ENCODE measurements at regions of chr19 and their contacts with region 1.

Region 1: GRCh38 chr19:21891081-21891480 is 55.1 kb upstream of the ZNF43 start:
- DNase-seq: no peak
- ATAC-seq: no peak
- H3K4me3 ChIP-seq: no peak overlapping the region
- H3K4me3 Mint-ChIP-seq: no peak overlapping the region
- H3K27ac ChIP-seq: no peak overlapping the region
- H3K27ac Mint-ChIP-seq: no peak overlapping the region
- H3K4me1 ChIP-seq: no peaks in the 10 kb centered on the region
- H3K4me1 Mint-ChIP-seq: no peaks in the 10 kb centered on the region
- H3K27me3 ChIP-seq: no peaks in the 10 kb centered on the region
- H3K27me3 Mint-ChIP-seq: no peaks in the 10 kb centered on the region
- CTCF ChIP-seq: no peak

Region 2: GRCh38 chr19:21559444-21559843 is 331.6 kb before region 1 on chr19:
- CTCF ChIA-PET with region 1: no interaction called
- POLR2A ChIA-PET with region 1: no interaction called
- intact Hi-C with region 1: no loop called
- DNase-seq: no peak
- ATAC-seq: no peak
- H3K4me3 ChIP-seq: no peak overlapping the region
- H3K4me3 Mint-ChIP-seq: no peak overlapping the region
- H3K27ac ChIP-seq: no peak overlapping the region
- H3K27ac Mint-ChIP-seq: no peak overlapping the region
- H3K4me1 ChIP-seq: no peaks in the 10 kb centered on the region
- H3K4me1 Mint-ChIP-seq: peaks cover 7% of the 10 kb centered on the region
- H3K27me3 ChIP-seq: no peaks in the 10 kb centered on the region
- H3K27me3 Mint-ChIP-seq: no peaks in the 10 kb centered on the region
- CTCF ChIP-seq: no peak

Region 3: GRCh38 chr19:21758296-21758695 is 132.8 kb before region 1 on chr19:
- CTCF ChIA-PET with region 1: no interaction called
- POLR2A ChIA-PET with region 1: no interaction called
- intact Hi-C with region 1: loop called in 1 of 2 experiments (anchors 5 kb)
- DNase-seq: peak in 2 of 14 experiments; percentile 4 to 17
- ATAC-seq: no peak
- H3K4me3 ChIP-seq: no peak overlapping the region
- H3K4me3 Mint-ChIP-seq: no peak overlapping the region
- H3K27ac ChIP-seq: no peak overlapping the region
- H3K27ac Mint-ChIP-seq: no peak overlapping the region
- H3K4me1 ChIP-seq: no peaks in the 10 kb centered on the region
- H3K4me1 Mint-ChIP-seq: peaks cover 44% of the 10 kb centered on the region
- H3K27me3 ChIP-seq: no peaks in the 10 kb centered on the region
- H3K27me3 Mint-ChIP-seq: no peaks in the 10 kb centered on the region
- CTCF ChIP-seq: no peak

Region 4: GRCh38 chr19:21921691-21922180 is 30.7 kb after region 1 on chr19:
- CTCF ChIA-PET with region 1: no interaction called
- POLR2A ChIA-PET with region 1: no interaction called
- intact Hi-C with region 1: no loop called
- DNase-seq: no peak
- ATAC-seq: no peak
- H3K4me3 ChIP-seq: no peak overlapping the region
- H3K4me3 Mint-ChIP-seq: no peak overlapping the region
- H3K27ac ChIP-seq: no peak overlapping the region
- H3K27ac Mint-ChIP-seq: no peak overlapping the region
- H3K4me1 ChIP-seq: no peaks in the 10 kb centered on the region
- H3K4me1 Mint-ChIP-seq: no peaks in the 10 kb centered on the region
- H3K27me3 ChIP-seq: no peaks in the 10 kb centered on the region
- H3K27me3 Mint-ChIP-seq: no peaks in the 10 kb centered on the region
- CTCF ChIP-seq: no peak

Region 5: GRCh38 chr19:21934146-21934545 is 43.1 kb after region 1 on chr19:
- CTCF ChIA-PET with region 1: no interaction called
- POLR2A ChIA-PET with region 1: no interaction called
- intact Hi-C with region 1: no loop called
- DNase-seq: no peak
- ATAC-seq: no peak
- H3K4me3 ChIP-seq: no peak overlapping the region
- H3K4me3 Mint-ChIP-seq: no peak overlapping the region
- H3K27ac ChIP-seq: no peak overlapping the region
- H3K27ac Mint-ChIP-seq: no peak overlapping the region
- H3K4me1 ChIP-seq: no peaks in the 10 kb centered on the region
- H3K4me1 Mint-ChIP-seq: no peaks in the 10 kb centered on the region
- H3K27me3 ChIP-seq: no peaks in the 10 kb centered on the region
- H3K27me3 Mint-ChIP-seq: no peaks in the 10 kb centered on the region
- CTCF ChIP-seq: no peak

Region 6: DNA sequence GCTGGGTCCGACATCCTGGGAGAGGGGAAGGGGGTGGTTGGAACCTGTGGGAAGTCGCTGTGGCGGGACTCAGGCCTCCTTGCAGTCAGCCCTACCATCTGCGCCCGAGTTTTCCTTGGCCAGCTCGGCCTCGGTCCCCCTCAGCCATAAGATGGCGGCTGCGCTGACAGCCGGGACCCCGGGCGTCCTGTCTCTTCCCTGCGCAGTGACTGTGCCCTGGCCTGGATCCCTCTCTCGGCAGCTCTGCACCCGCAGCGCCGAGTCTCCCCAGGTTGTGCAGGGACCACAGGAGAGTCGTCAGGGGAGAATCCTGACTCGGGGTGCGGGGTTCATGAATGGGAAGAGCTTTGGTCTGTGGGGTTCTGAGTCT is 161.5 kb after region 1 on chr19:
- CTCF ChIA-PET with region 1: no interaction called
- POLR2A ChIA-PET with region 1: no interaction called
- intact Hi-C with region 1: no loop called
- DNase-seq: peak in 8 of 14 experiments; percentile 3 to 33 (median 15)
- ATAC-seq: peak; percentile 43
- H3K4me3 ChIP-seq: peak overlapping the region; percentile 70
- H3K4me3 Mint-ChIP-seq: peak overlapping the region; percentile 97
- H3K27ac ChIP-seq: no peak overlapping the region
- H3K27ac Mint-ChIP-seq: peak overlapping the region; percentile 90
- H3K4me1 ChIP-seq: peaks cover 7% of the 10 kb centered on the region
- H3K4me1 Mint-ChIP-seq: peaks cover 13% of the 10 kb centered on the region
- H3K27me3 ChIP-seq: no peaks in the 10 kb centered on the region
- H3K27me3 Mint-ChIP-seq: no peaks in the 10 kb centered on the region
- CTCF ChIP-seq: no peak

Measured in CD4-positive, alpha-beta T cell (primary cell).